ENCODE measurements at regions of chr4 and their contacts with region 1.

Region 1: DNA sequence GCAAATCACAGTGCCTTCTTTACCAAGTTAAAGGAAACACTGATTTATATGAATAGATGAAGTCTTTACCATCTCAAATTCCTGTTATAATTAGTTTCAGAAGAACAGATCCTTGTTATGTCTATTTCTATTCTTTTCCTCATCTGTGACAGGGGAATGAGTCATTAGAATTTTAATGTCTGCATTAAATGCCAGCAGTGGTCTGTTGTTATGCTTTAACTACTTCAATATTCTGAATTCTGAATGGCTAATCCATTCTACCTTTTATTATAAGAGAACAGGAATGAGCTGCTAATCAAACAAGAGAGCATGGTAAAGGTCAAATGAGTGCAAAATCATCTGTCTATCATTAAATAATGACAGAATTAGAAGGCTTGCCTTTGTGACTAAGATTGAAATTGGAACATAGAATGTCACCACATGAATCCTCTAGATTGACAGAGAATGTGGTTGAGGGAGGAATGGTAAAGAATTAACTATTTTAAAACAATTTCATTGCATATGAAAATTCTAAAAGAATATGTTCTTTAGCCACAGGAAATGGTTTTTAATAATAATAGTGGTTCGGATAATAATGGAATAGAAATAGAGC is 935.5 kb downstream of the ADGRL3 start:
- DNase-seq: no peak

Region 2: GRCh38 chr4:61540944-61541343 is 594.7 kb before region 1 on chr4:
- intact Hi-C with region 1: loop called (anchors 10 kb)
- DNase-seq: no peak

Region 3: DNA sequence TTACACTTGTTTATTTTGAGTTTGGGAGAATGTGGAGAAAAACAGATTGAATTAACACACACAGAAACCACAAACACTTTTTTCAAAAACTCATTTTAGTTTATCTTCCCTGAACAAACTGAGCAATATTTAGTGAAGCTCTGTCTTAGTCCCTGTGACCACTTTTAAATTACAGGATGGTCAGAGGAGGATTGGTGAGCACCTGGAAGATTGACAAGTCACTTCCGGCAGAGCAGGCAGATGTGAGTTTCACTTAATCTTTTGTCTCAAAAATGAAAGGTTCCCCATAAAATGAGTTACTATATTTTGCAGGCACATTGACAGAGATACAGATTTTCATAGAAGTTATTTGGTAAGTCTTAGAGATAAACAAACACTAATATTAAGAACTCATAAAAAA is 34.6 kb after region 1 on chr4:
- intact Hi-C with region 1: no loop called
- DNase-seq: no peak

Region 4: GRCh38 chr4:62243895-62244294 is 108.2 kb after region 1 on chr4:
- intact Hi-C with region 1: no loop called
- DNase-seq: no peak

Region 5: DNA sequence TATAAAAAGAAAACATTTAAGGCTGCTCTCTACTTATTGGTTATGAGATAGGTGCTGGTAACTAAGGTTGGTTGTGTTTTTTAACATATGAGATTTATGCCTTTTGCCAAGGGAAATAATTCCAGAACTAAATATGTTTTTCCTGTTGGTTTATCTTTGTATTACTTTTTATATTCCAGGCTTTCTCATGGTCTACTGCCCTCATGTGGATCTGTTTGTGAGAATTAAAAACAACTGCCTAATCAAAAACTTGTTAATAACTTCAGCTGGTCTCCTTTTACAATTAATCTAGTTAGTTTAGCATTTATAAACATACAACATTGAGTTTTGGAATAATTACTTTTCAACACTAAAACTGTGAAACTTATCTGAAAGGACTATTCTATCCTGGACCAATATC is 272.8 kb after region 1 on chr4:
- intact Hi-C with region 1: loop called (anchors 10 kb)
- DNase-seq: no peak